T-cell (primary cell): ENCODE measurements at regions of chr9 and their contacts with region 1.

Region 1: DNA sequence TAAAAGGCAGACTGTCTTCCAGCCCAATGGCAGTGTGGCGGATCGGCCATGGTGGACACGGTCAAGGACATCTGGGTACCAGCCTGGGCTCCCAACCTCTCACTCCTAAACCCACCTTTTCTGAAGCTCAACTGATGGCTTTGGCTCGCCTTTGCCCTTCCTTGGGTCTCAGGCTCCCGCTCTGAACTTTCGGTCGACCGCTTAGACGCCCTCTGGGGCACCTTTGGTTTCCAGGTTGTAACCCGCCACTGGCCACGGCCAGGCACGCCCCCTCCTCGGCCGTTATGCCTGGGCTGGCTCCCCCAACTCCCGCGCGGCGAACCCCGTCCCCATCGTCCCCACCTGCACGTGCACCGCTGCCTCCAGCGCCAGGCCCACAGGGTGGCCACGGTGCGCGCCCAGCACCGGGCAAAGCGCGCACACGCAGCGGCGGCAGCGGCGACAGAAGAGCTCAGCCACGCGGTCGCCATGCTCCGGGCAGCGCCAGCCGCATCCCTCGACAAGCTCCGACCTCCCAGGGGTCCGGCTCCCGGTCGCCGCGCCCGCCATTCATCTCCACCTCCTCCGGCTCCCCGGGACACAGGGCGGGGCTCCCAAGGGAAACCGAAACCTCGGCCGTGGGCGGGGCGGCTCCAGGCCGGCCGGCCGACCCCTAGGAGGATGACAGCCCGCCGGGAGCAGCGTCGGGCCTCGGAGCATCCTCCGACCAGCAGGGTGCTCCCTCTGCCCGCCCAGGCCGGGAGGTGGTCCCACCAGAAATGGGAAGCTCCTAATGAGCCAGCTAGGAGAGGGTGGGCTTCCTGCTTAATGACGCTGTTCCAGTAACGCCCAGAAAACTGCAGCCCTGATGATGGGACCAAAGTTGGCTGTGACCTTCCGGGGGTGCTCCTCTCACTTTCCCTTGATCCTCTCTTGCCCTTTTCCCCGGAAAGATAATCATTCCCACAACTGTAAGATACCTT is at the start of gene TRIM14:
- DNase-seq: peak in 29 of 35 experiments; percentile 10 to 71 (median 31)
- ATAC-seq: peak; percentile 55 to 68 (median 63)
- H3K4me3 ChIP-seq: peak within 1 kb of the TSS; percentile 74 to 82
- H3K4me3 Mint-ChIP-seq: peak within 1 kb of the TSS; percentile 86 to 94 (median 90)
- H3K27ac ChIP-seq: peak within 1 kb of the TSS; percentile 83
- H3K27ac Mint-ChIP-seq: peak within 1 kb of the TSS; percentile 96 to 98
- H3K4me1 ChIP-seq: peaks cover 26 to 66% of the 10 kb centered on the region in 2 experiments
- H3K4me1 Mint-ChIP-seq: peaks cover 49 to 66% (median 63%) of the 10 kb centered on the region in 3 donors
- H3K27me3 ChIP-seq: no peaks in the 10 kb centered on the region
- H3K27me3 Mint-ChIP-seq: no peaks in the 10 kb centered on the region
- total RNA-seq, gene TRIM14: 75.7 to 98.9 (median 85.3) TPM

Region 2: DNA sequence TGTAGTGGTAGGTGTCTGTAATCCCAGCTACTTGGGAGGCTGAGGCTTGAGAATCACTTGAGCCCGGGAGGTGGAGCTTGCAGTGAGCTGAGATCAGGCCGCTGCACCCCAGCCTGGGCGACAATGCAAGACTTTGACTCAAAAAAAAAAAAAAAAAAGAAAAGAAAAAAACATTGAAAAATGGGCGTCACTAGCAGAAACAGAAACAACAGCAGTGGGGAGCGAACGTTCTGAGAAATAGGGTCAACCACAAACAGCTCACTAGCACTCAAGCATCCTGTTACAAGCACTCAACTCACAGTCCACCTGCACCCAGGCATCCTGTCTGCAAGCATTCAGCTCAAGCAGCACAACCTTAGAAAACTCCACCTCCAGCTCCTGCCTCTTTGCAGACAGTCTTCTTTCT is 17.1 kb before region 1 on chr9:
- CTCF ChIA-PET with region 1: interaction called, 7 to 28 read pairs
- POLR2A ChIA-PET with region 1: interaction called, 5 to 8 read pairs
- DNase-seq: peak; percentile 49 to 95 (median 83)
- ATAC-seq: peak; percentile 95 to 97 (median 96)
- H3K4me3 ChIP-seq: peak overlapping the region in 1 of 2 donors; percentile 13
- H3K4me3 Mint-ChIP-seq: peak overlapping the region; percentile 65 to 74 (median 69)
- H3K27ac ChIP-seq: peak overlapping the region; percentile 77
- H3K27ac Mint-ChIP-seq: peak overlapping the region; percentile 95 to 99
- H3K4me1 ChIP-seq: peaks cover 67 to 92% of the 10 kb centered on the region in 2 experiments
- H3K4me1 Mint-ChIP-seq: peaks cover 86 to 95% (median 86%) of the 10 kb centered on the region in 3 donors
- H3K27me3 ChIP-seq: no peaks in the 10 kb centered on the region
- H3K27me3 Mint-ChIP-seq: no peaks in the 10 kb centered on the region

Region 3: GRCh38 chr9:98108531-98109031 is 10.3 kb before region 1 on chr9:
- CTCF ChIA-PET with region 1: interaction called, 3 to 19 read pairs
- POLR2A ChIA-PET with region 1: interaction called, 4 read pairs
- DNase-seq: peak in 25 of 35 experiments; percentile 16 to 81 (median 35)
- ATAC-seq: peak; percentile 89 to 96 (median 94)
- H3K4me3 ChIP-seq: no peak overlapping the region
- H3K4me3 Mint-ChIP-seq: peak overlapping the region; percentile 11 to 60 (median 51)
- H3K27ac ChIP-seq: peak overlapping the region; percentile 90
- H3K27ac Mint-ChIP-seq: peak overlapping the region; percentile 95 to 99
- H3K4me1 ChIP-seq: peaks cover 45 to 71% of the 10 kb centered on the region in 2 experiments
- H3K4me1 Mint-ChIP-seq: peaks cover 84 to 87% (median 86%) of the 10 kb centered on the region in 3 donors
- H3K27me3 ChIP-seq: no peaks in the 10 kb centered on the region
- H3K27me3 Mint-ChIP-seq: no peaks in the 10 kb centered on the region

Region 4: GRCh38 chr9:98217255-98217654 is 98.3 kb after region 1 on chr9:
- CTCF ChIA-PET with region 1: interaction called in 1 of 2 experiments, 4 read pairs
- POLR2A ChIA-PET with region 1: interaction called in 1 of 2 experiments, 16 read pairs
- DNase-seq: no peak
- ATAC-seq: no peak
- H3K4me3 ChIP-seq: no peak overlapping the region
- H3K4me3 Mint-ChIP-seq: no peak overlapping the region
- H3K27ac ChIP-seq: no peak overlapping the region
- H3K27ac Mint-ChIP-seq: no peak overlapping the region
- H3K4me1 ChIP-seq: no peaks in the 10 kb centered on the region
- H3K4me1 Mint-ChIP-seq: no peaks in the 10 kb centered on the region
- H3K27me3 ChIP-seq: no peaks in the 10 kb centered on the region
- H3K27me3 Mint-ChIP-seq: no peaks in the 10 kb centered on the region